A549 (cell line): ENCODE measurements at regions of chr2 and their contacts with region 1.

Region 1: DNA sequence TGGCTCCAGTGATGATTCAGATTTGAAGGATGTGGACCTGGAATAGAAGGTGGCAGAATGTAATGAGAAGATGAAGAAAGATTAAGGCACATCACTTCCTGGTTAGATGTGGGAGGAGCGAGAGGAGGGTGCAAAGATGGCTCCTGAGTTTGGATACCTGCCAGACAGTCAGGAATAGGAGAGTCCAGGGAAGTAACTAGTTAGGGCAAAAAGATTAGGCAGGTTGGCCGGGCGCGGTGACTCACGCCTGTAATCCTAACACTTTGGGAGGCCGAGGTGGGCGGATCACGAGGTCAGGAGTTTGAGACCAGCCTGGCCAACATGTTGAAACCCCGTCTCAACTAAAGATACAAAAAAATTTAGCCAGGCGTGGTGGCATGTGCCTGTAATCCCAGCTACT is 5.6 kb downstream of the C2orf74 start:
- DNase-seq: peak in 1 of 2 experiments; percentile 46
- ATAC-seq: peak in 1 of 2 experiments; percentile 47; a peak in 2 of 6 replicates
- H3K4me3 ChIP-seq: no peak overlapping the region
- H3K27ac ChIP-seq: no peak overlapping the region
- H3K4me1 ChIP-seq: no peaks in the 10 kb centered on the region
- CTCF ChIP-seq: no peak
- EP300 ChIP-seq: no peak
- POLR2A ChIP-seq: no peak
- RAD21 ChIP-seq: no peak

Region 2: GRCh38 chr2:61151436-61151835 is 16.2 kb before region 1 on chr2:
- CTCF ChIA-PET with region 1: interaction called, 11 read pairs
- POLR2A ChIA-PET with region 1: interaction called, 3 read pairs
- DNase-seq: peak in 1 of 2 experiments; percentile 26
- ATAC-seq: no peak
- H3K4me3 ChIP-seq: no peak overlapping the region
- H3K27ac ChIP-seq: no peak overlapping the region
- H3K4me1 ChIP-seq: no peaks in the 10 kb centered on the region
- CTCF ChIP-seq: no peak
- EP300 ChIP-seq: no peak
- POLR2A ChIP-seq: no peak
- RAD21 ChIP-seq: no peak